Calu3 (cell line): ENCODE measurements at regions of chr6 and their contacts with region 1.

Region 1: DNA sequence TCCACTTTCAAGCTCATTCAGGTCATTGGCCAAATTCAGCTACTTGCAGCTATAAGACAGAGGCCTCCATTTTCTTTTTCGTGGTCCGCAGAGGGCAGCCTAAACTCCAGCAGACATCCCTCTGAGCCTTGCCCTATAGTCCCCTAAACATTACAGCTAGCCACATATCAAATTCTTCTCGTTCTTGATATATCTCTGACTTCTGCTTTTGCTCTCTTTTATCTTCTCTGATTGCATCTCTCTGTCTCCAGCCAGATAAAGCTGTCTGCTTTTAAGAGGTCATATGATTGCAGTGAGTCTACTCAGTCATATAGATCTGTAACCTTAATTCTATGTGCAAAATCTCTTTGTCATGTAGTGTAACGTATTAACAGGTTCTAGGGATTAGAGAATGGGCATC is 358.4 kb upstream of the RGS17 start:
- DNase-seq: no peak
- H3K4me3 Mint-ChIP-seq: no peak overlapping the region
- H3K27ac Mint-ChIP-seq: no peak overlapping the region
- H3K4me1 Mint-ChIP-seq: no peaks in the 10 kb centered on the region
- H3K27me3 Mint-ChIP-seq: no peaks in the 10 kb centered on the region
- CTCF ChIP-seq: no peak

Region 2: DNA sequence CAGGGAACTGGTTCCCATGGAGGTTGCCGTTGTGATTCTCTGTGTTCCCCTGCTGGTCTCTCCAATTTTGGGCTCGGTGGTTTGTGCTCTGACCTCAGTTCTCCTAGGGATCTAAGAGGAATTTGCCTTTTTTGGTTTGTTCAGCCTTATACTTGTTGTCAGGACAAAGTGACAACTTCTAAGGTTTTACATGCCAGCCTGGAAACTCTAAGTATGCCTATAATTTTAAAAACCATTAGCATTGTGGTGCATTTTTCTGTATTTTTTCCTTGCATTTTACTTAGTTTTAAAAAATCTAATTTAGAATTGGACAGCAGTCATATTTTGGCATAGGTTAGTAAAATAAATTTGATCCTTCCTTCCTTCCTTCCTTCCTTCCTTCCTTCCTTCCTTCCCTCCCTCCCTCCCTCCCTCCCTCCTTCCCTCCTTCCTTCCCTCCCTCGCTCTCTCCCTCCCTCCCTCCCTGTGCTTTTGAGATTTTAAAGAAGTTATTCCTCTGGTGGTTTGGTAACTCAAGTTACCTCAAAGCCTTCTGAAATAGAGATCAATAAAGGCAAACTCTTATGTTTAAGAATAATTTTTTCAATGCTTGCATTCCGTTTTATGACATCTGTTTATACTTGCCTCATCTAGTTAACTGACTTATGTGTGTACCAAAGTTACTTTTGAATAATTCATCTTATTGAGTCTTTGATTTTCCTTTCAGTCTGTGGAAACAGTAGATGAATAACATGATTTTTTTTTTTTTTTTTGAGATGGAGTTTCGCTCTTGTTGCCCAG is 217.1 kb before region 1 on chr6:
- CTCF ChIA-PET with region 1: no interaction called
- intact Hi-C with region 1: no loop called
- DNase-seq: no peak
- H3K4me3 Mint-ChIP-seq: no peak overlapping the region
- H3K27ac Mint-ChIP-seq: no peak overlapping the region
- H3K4me1 Mint-ChIP-seq: no peaks in the 10 kb centered on the region
- H3K27me3 Mint-ChIP-seq: no peaks in the 10 kb centered on the region
- CTCF ChIP-seq: no peak

Region 3: DNA sequence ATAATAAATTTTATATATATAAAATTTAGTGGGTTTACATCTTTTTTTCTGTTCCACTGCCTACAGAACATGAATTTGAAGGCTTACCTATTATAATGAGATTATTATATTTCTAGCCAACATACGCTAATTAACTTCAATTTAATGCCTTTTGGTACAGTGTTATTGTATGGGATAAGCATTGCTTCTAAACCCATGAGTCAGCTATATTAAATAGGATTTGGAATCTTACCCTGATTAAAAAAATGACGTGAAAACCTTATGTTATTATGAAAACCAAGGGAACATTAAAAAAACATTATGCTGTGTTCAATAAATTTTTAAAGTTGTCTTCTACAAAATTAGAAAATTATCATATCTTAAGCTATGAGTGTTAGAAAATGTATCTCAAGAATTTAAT is 24.4 kb before region 1 on chr6:
- CTCF ChIA-PET with region 1: interaction called, 13 read pairs
- intact Hi-C with region 1: no loop called
- DNase-seq: no peak
- H3K4me3 Mint-ChIP-seq: no peak overlapping the region
- H3K27ac Mint-ChIP-seq: no peak overlapping the region
- H3K4me1 Mint-ChIP-seq: no peaks in the 10 kb centered on the region
- H3K27me3 Mint-ChIP-seq: no peaks in the 10 kb centered on the region
- CTCF ChIP-seq: no peak